ENCODE measurements at regions of chr9 and their contacts with region 1.

Region 1: DNA sequence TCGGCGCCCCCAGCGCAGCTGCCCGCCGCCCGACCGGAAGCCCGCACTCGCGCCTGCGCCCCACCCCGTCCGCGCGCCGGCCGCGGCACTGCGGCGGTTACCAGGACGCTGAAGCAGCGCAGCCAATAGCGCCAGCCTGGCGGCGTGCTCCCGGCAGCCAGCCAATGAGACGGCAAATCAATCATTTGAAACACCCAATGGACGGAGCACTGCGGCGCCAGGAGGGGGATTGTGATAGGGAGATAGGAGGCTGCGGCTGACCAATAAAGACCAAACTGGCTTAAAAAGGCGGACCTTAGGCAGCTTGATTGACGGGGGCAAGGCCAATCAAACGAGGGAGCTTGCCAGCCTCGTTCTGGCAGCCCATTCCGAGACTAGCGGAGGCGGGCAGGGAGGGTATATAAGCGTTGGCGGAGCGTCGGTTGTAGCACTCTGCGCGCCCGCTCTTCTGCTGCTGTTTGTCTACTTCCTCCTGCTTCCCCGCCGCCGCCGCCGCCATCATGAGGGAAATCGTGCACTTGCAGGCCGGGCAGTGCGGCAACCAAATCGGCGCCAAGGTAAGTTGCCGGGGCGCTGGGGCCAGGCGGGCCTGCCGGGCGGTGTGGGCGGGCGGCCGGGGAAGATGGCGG is at the start of gene TUBB4B:
- DNase-seq: peak; percentile 93 to 100 (median 97)
- ATAC-seq: peak; percentile 78
- H3K4me3 ChIP-seq: peak within 1 kb of the TSS; percentile 59 to 68
- H3K4me3 Mint-ChIP-seq: peak within 1 kb of the TSS; percentile 91
- H3K27ac ChIP-seq: peak within 1 kb of the TSS; percentile 73 to 85
- H3K27ac Mint-ChIP-seq: peak within 1 kb of the TSS; percentile 93
- H3K4me1 ChIP-seq: peaks cover 37% of the 10 kb centered on the region
- H3K4me1 Mint-ChIP-seq: peaks cover 25% of the 10 kb centered on the region
- H3K27me3 ChIP-seq: no peaks in the 10 kb centered on the region
- H3K27me3 Mint-ChIP-seq: no peaks in the 10 kb centered on the region
- CTCF ChIP-seq: no peak
- total RNA-seq, gene TUBB4B: 114 to 120 TPM

Region 2: GRCh38 chr9:136728080-136728547 is 512.9 kb before region 1 on chr9:
- CTCF ChIA-PET with region 1: no interaction called
- POLR2A ChIA-PET with region 1: interaction called, 3 read pairs
- intact Hi-C with region 1: loop called in 1 of 2 experiments (anchors 10 kb)
- DNase-seq: peak; percentile 86 to 97 (median 92)
- ATAC-seq: peak; percentile 80
- H3K4me3 ChIP-seq: peak overlapping the region; percentile 66 to 96
- H3K4me3 Mint-ChIP-seq: peak overlapping the region; percentile 92
- H3K27ac ChIP-seq: peak overlapping the region in 1 of 2 experiments; percentile 84
- H3K27ac Mint-ChIP-seq: peak overlapping the region; percentile 45
- H3K4me1 ChIP-seq: peaks cover 30% of the 10 kb centered on the region
- H3K4me1 Mint-ChIP-seq: peaks cover 25% of the 10 kb centered on the region
- H3K27me3 ChIP-seq: no peaks in the 10 kb centered on the region
- H3K27me3 Mint-ChIP-seq: no peaks in the 10 kb centered on the region
- CTCF ChIP-seq: peak; percentile 93

Region 3: DNA sequence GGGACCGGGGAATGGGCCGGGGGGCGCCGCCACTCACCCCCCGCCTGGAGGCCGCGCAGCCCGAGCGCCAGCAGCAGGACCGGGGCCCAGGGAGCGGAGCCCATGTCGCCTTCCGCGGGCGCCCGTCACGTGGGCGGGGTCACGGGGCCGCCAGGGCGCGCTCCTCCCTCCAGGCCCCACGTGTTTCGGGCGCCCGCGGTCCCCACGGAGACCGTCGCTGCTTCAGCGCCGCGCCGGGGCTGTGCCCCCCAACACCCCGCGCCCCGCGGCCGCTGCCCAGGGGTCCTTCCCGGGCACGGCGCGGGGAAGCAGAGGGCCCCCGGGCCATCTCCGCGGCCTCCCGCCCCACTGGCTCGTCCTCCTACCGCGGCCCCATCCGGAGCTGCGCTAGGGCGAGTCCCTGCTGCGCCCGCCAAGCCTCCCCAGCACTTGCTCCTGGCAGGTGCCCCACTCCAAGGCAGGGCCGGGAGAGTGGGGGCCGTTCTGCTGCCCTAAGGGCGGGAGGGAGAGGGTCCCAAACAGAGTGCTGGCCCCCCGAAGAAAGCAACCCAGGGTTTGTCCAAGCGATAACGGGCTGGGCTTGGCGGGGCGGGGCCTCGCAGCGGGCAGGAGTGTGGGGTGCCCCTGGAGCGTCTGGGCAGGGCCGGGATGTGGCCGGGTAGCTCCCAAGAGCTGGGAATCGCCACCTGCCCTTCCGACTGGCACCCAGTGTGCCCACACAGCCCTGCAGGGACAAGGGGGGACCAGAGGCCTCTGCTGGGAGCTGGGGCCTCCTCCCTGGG is 126.2 kb before region 1 on chr9 and contains the start of gene DPP7:
- CTCF ChIA-PET with region 1: interaction called, 10 read pairs
- POLR2A ChIA-PET with region 1: interaction called, 7 read pairs
- intact Hi-C with region 1: no loop called
- DNase-seq: peak; percentile 50 to 90 (median 78)
- ATAC-seq: peak; percentile 90
- H3K4me3 ChIP-seq: peak within 1 kb of the TSS; percentile 43 to 58
- H3K4me3 Mint-ChIP-seq: peak within 1 kb of the TSS; percentile 69
- H3K27ac ChIP-seq: peak within 1 kb of the TSS in 1 of 2 experiments; percentile 30
- H3K27ac Mint-ChIP-seq: peak within 1 kb of the TSS; percentile 70
- H3K4me1 ChIP-seq: peaks cover 14% of the 10 kb centered on the region
- H3K4me1 Mint-ChIP-seq: peaks cover 7% of the 10 kb centered on the region
- H3K27me3 ChIP-seq: no peaks in the 10 kb centered on the region
- H3K27me3 Mint-ChIP-seq: no peaks in the 10 kb centered on the region
- CTCF ChIP-seq: no peak
- total RNA-seq, gene DPP7: 311 to 325 TPM

Region 4: DNA sequence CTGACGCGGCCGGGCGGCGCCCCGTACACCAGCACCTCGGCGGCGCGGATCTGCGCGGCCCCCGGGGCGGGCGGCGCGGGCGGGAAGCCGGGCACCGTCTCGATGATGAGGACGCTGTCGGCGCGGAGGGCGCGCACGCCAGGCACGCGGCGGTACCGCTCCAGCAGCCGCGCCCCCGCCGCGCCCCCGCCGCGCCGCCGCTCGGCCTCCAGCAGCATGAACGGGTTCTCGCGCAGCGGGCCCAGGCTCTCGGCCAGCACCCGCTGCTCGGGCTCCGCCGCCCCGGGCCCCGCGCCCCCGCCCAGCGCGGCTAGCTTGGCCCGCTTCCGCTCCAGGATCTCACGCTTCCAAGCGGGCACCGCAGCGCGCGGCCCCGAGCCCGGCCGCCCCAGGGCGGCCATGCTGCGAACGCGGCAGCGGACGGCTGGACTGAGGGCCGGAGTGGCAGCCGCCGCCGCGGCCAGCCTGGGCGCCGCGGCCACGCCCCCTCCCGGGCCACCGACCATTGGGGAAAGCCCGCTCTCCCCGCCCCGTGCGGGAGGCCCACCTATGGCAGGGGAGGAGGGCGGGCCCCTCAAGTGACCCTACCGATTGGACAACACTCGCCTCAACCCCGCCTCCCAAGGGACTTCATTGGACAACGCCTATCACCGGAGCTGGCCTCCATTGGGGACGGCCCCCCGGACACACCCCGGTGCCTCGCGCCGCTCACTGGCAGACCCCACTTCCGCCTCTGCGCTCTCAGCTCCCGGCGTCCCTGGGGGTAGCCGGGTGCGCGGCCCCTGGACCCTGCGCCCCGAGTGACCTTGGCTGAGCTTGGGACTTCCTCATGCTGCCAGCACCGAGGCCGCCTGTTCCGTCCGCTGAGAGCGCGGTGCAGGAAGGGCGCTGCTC is 40.4 kb before region 1 on chr9 and contains the start of gene TPRN:
- CTCF ChIA-PET with region 1: interaction called, 4 read pairs
- POLR2A ChIA-PET with region 1: interaction called, 12 read pairs
- intact Hi-C with region 1: loop called (anchors 1 kb)
- DNase-seq: peak; percentile 96 to 99 (median 98)
- ATAC-seq: peak; percentile 96
- H3K4me3 ChIP-seq: peak within 1 kb of the TSS; percentile 64 to 88
- H3K4me3 Mint-ChIP-seq: peak within 1 kb of the TSS; percentile 83
- H3K27ac ChIP-seq: peak within 1 kb of the TSS; percentile 65 to 82
- H3K27ac Mint-ChIP-seq: peak within 1 kb of the TSS; percentile 57
- H3K4me1 ChIP-seq: peaks cover 22% of the 10 kb centered on the region
- H3K4me1 Mint-ChIP-seq: peaks cover 27% of the 10 kb centered on the region
- H3K27me3 ChIP-seq: no peaks in the 10 kb centered on the region
- H3K27me3 Mint-ChIP-seq: no peaks in the 10 kb centered on the region
- CTCF ChIP-seq: no peak
- total RNA-seq, gene TPRN: 4.1 to 4.4 TPM

Region 5: DNA sequence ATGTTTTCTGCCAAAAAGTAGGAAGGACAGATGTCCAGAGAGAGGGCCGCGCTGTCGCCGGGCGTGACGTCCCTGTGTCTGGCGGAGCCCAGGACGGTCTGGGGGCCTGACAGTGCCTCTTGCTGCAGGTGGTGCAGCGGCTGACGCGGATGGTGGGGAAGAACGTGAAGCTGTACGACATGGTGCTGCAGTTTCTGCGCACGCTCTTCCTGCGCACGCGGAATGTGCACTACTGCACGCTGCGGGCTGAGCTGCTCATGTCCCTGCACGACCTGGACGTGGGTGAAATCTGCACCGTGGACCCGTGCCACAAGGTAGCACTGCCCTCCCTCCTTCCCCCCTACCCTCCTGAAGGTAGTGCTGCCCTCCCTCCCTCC is 21.9 kb after region 1 on chr9:
- CTCF ChIA-PET with region 1: interaction called, 19 read pairs
- POLR2A ChIA-PET with region 1: no interaction called
- intact Hi-C with region 1: loop called in 1 of 2 experiments (anchors 1 kb)
- DNase-seq: peak in 1 of 9 experiments; percentile 5
- ATAC-seq: no peak
- H3K4me3 ChIP-seq: no peak overlapping the region
- H3K4me3 Mint-ChIP-seq: no peak overlapping the region
- H3K27ac ChIP-seq: no peak overlapping the region
- H3K27ac Mint-ChIP-seq: no peak overlapping the region
- H3K4me1 ChIP-seq: no peaks in the 10 kb centered on the region
- H3K4me1 Mint-ChIP-seq: peaks cover 2% of the 10 kb centered on the region
- H3K27me3 ChIP-seq: no peaks in the 10 kb centered on the region
- H3K27me3 Mint-ChIP-seq: no peaks in the 10 kb centered on the region
- CTCF ChIP-seq: no peak

Region 6: GRCh38 chr9:137423004-137423874 is 182.3 kb after region 1 on chr9 and contains the starts of genes EXD3 and NOXA1:
- CTCF ChIA-PET with region 1: no interaction called
- POLR2A ChIA-PET with region 1: interaction called, 3 read pairs
- intact Hi-C with region 1: loop called in 1 of 2 experiments (anchors 2 kb)
- DNase-seq: peak; percentile 91 to 98 (median 94)
- ATAC-seq: peak; percentile 93
- H3K4me3 ChIP-seq: peak within 1 kb of the TSS; percentile 60 to 72
- H3K4me3 Mint-ChIP-seq: peak within 1 kb of the TSS; percentile 83
- H3K27ac ChIP-seq: peak within 1 kb of the TSS in 1 of 2 experiments; percentile 50
- H3K27ac Mint-ChIP-seq: no peak within 1 kb of the TSS
- H3K4me1 ChIP-seq: peaks cover 17% of the 10 kb centered on the region
- H3K4me1 Mint-ChIP-seq: peaks cover 20% of the 10 kb centered on the region
- H3K27me3 ChIP-seq: no peaks in the 10 kb centered on the region
- H3K27me3 Mint-ChIP-seq: no peaks in the 10 kb centered on the region
- CTCF ChIP-seq: peak; percentile 46
- total RNA-seq, gene EXD3: 9.1 to 11.0 TPM
- total RNA-seq, gene NOXA1: 2.4 to 2.7 TPM